Uterus (tissue), 4 donors: ENCODE measurements at regions of chr22 and their contacts with region 1.

Region 1: GRCh38 chr22:20430720-20431510 is 6.7 kb downstream of the SCARF2 start:
- DNase-seq: no peak
- H3K4me3 ChIP-seq: no peak overlapping the region
- H3K27ac ChIP-seq: no peak overlapping the region
- H3K4me1 ChIP-seq: peaks cover 0 to 14% of the 10 kb centered on the region in 2 donors
- H3K27me3 ChIP-seq: no peaks in the 10 kb centered on the region
- CTCF ChIP-seq: peak in 2 of 4 experiments; percentile 10 to 26
- POLR2A ChIP-seq: no peak

Region 2: DNA sequence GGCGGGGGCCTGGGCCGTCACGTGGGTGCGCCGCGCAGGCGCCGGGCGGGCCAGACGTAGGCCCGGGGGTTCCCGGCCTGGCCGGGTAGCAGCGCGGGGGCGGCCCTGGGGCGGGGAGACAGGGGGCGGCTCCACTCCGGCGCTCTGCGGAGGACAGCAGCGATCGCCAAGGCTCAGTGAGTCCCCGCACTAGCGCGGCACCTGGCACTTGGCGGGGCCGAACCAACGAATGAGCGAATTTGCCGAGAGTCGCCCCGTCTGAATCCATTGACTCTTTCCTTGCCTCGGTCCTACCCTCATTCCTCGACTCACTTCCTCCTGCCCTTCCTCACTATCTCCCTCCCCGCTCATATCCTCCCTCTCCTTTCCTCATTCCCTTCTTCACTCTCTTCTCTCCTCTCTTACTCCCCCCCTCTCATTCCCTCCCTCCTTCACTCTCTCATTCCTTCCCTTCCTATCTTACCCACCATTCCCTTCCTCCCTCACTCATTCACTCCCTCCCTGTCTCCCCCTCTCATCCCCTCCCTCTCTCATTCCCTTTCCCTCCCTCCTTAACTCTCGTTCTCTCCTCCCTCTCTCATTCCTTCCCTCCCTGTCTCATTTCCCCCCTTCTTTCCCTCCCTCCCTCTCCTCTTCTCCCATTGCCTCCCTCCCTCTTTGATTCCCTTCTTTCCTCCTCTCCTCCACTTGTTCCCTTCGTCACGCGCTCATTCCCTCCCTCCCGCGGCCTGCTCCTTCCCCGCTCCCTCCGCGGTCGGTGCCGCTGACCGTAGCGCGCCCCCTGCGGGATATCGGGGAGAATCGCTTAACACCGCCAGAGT is 65.2 kb after region 1 on chr22:
- intact Hi-C with region 1: loop called (anchors 10 kb)
- DNase-seq: peak; percentile 87 to 92
- H3K4me3 ChIP-seq: peak overlapping the region; percentile 72 to 88
- H3K27ac ChIP-seq: peak overlapping the region; percentile 93 to 98
- H3K4me1 ChIP-seq: peaks cover 9 to 11% of the 10 kb centered on the region in 2 donors
- H3K27me3 ChIP-seq: no peaks in the 10 kb centered on the region
- CTCF ChIP-seq: peak; percentile 87 to 92 (median 89)
- POLR2A ChIP-seq: peak; percentile 59 to 74